Psoas muscle (tissue), 8 donors: ENCODE measurements at regions of chr4 and their contacts with region 1.

Region 1: GRCh38 chr4:183840311-183840710 is 64.8 kb upstream of the STOX2 start:
- DNase-seq: peak; percentile 73 to 80
- ATAC-seq: peak; percentile 73 to 91 (median 76)
- H3K4me3 ChIP-seq: no peak overlapping the region
- H3K27ac ChIP-seq: no peak overlapping the region
- H3K4me1 ChIP-seq: no peaks in the 10 kb centered on the region
- H3K27me3 ChIP-seq: no peaks in the 10 kb centered on the region
- CTCF ChIP-seq: peak; percentile 92

Region 2: DNA sequence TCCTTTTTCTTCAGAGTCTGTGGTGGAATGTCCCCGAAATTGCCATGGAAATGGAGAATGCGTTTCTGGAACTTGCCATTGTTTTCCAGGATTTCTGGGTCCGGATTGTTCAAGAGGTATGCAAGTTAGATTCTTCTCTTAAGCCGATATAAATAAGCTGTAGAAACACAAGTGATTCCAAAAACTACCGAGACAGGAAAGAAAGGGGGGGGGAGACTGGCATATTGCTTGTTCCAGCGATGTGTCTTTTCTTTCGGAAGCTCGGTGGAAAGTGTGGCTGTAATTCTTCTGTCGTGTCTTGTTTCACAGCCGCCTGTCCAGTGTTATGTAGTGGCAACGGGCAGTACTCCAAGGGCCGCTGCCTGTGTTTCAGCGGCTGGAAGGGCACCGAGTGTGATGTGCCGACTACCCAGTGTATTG is 1160.1 kb before region 1 on chr4:
- intact Hi-C with region 1: no loop called
- DNase-seq: peak; percentile 31 to 54
- ATAC-seq: peak; percentile 72 to 89 (median 85)
- H3K4me3 ChIP-seq: peak overlapping the region; percentile 39
- H3K27ac ChIP-seq: no peak overlapping the region
- H3K4me1 ChIP-seq: peaks cover 3% of the 10 kb centered on the region
- H3K27me3 ChIP-seq: no peaks in the 10 kb centered on the region
- CTCF ChIP-seq: no peak

Region 3: DNA sequence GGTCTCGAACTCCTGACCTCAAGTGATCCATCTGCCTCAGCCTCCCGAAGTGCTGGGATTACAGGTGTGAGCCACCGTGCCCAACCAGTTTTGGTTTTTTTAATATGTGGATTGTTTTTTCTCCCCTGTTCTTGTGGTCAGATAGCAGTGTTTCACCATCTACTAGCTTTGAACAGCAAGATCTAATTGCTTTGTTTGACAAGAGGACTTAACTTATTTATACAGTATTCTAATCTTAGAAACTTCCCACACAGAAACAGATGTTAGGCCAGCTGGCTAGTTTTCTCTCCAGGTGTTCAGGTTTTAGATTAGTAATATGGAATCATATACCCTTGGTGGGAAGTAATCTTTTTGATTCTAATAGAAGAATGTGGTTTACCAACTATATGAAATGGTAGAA is 322.5 kb before region 1 on chr4:
- intact Hi-C with region 1: no loop called
- DNase-seq: no peak
- ATAC-seq: no peak
- H3K4me3 ChIP-seq: no peak overlapping the region
- H3K27ac ChIP-seq: no peak overlapping the region
- H3K4me1 ChIP-seq: no peaks in the 10 kb centered on the region
- H3K27me3 ChIP-seq: no peaks in the 10 kb centered on the region
- CTCF ChIP-seq: no peak

Region 4: DNA sequence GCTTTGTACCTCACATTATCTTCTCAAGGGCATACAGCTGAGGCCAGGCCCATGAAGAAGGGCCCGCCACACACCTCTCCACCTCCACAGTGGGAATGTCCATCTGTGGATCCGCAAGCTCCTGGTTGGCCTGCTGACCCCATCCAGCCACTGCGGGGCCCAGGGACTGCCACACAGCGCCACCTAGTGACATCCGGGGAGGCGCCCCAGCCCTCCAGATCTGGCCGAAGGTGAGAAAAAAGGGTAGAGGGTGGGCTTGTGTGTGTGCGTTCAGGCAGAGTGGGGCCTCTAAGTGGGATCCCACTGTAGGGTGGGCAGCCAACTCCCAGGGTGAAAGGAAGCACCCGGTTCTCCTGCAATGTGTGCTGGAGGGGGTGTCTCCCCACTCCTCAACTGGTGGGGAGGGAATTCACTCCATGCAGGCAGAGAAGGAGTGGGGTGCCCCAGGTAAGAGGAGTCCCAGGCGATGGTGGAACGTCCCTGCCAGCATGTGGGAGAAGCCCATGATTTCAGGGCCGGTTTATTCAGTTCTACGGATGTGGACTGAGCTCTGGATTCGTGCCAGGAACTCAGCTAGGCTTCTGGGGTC is 260.1 kb after region 1 on chr4:
- intact Hi-C with region 1: loop called (anchors 1 to 2 kb)
- DNase-seq: peak; percentile 31 to 76
- ATAC-seq: peak; percentile 44 to 91 (median 70)
- H3K4me3 ChIP-seq: no peak overlapping the region
- H3K27ac ChIP-seq: no peak overlapping the region
- H3K4me1 ChIP-seq: no peaks in the 10 kb centered on the region
- H3K27me3 ChIP-seq: peaks cover 0 to 6% (median 0%) of the 10 kb centered on the region in 3 donors
- CTCF ChIP-seq: peak; percentile 44

Region 5: DNA sequence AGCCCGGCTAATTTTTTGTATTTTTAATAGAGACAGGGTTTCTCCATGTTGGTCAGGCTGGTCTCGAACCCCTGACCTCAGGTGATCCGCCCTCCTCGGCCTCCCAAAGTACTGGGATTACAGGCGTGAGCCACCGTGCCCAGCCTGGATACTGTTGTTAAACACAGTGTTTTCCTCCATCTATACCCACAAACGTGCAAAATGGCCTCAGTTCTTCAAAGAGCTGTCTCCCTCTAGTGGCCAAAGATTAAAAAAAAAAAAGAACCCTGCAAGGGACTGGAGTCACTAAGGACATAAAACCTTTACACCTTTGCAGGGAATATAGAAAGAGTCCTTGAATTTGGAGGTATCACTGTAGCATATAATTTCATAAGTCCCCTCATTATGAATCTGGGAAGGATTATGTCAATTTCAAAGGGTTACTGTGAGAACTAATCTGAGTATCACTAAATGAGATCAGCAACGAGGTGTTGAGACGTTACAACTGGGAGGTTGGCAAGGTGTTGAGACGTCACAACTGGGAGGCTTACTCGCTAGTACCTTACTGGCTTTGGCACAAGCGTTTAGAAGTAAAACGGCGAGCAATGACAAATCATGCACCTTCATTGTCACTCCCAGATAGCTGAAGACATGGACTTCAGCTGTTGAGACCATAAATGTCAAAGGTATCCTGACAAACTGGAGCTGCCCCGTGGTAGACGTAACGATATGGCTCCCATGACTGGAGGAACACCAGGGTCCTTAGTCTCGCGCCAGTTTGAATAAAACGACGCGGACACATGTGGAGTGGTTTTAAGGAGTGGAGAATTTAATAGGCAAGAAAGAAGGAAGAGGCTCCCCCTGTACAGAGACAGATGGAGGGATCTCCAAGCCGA is 410.7 kb after region 1 on chr4:
- intact Hi-C with region 1: loop called in 1 of 2 experiments (anchors 5 kb)
- DNase-seq: no peak
- ATAC-seq: no peak
- H3K4me3 ChIP-seq: no peak overlapping the region
- H3K27ac ChIP-seq: no peak overlapping the region
- H3K4me1 ChIP-seq: no peaks in the 10 kb centered on the region
- H3K27me3 ChIP-seq: no peaks in the 10 kb centered on the region
- CTCF ChIP-seq: peak; percentile 49